Natural killer cell (primary cell): ENCODE measurements at regions of chr3 and their contacts with region 1.

Region 1: GRCh38 chr3:111668912-111669488 is 73.9 kb upstream of the ZBED2 start:
- DNase-seq: peak in 1 of 2 donors; percentile 71
- ATAC-seq: peak; percentile 44 to 57 (median 50)
- H3K4me3 ChIP-seq: no peak overlapping the region
- H3K4me3 Mint-ChIP-seq: peak overlapping the region; percentile 78
- H3K27ac ChIP-seq: no peak overlapping the region
- H3K27ac Mint-ChIP-seq: peak overlapping the region; percentile 89 to 97
- H3K4me1 ChIP-seq: peaks cover 28% of the 10 kb centered on the region
- H3K4me1 Mint-ChIP-seq: peaks cover 64 to 68% of the 10 kb centered on the region in 2 donors
- H3K27me3 ChIP-seq: no peaks in the 10 kb centered on the region
- H3K27me3 Mint-ChIP-seq: no peaks in the 10 kb centered on the region
- CTCF ChIP-seq: peak; percentile 95

Region 2: DNA sequence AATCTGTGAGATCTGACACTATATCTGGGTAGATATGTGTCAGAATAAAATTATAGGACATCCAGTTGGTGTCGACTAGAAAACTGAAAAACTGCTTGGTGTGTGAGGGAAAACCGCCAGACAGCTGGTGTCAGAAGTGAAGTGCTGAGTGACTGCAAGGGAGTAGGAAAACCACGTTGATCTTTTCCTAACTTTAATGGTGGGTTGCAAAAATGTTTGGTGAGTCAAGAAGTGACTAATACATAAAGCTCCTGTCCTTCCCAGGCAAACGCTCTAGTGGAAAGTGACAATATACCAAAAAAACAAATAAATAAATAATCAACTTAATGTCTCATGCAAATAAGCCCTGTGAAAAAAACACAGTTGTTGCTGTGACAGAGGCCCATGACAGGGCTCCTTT is 134.3 kb before region 1 on chr3:
- intact Hi-C with region 1: no loop called
- DNase-seq: no peak
- ATAC-seq: no peak
- H3K4me3 ChIP-seq: no peak overlapping the region
- H3K4me3 Mint-ChIP-seq: no peak overlapping the region
- H3K27ac ChIP-seq: no peak overlapping the region
- H3K27ac Mint-ChIP-seq: peak overlapping the region in 1 of 2 donors; percentile 10
- H3K4me1 ChIP-seq: peaks cover 8% of the 10 kb centered on the region
- H3K4me1 Mint-ChIP-seq: peaks cover 15 to 20% of the 10 kb centered on the region in 2 donors
- H3K27me3 ChIP-seq: no peaks in the 10 kb centered on the region
- H3K27me3 Mint-ChIP-seq: peaks cover 0 to 3% of the 10 kb centered on the region in 2 donors
- CTCF ChIP-seq: no peak

Region 3: GRCh38 chr3:111547631-111548030 is 121.4 kb before region 1 on chr3:
- intact Hi-C with region 1: loop called (anchors 5 kb)
- DNase-seq: peak in 1 of 2 donors; percentile 82
- ATAC-seq: peak; percentile 38 to 57 (median 56)
- H3K4me3 ChIP-seq: peak overlapping the region; percentile 23
- H3K4me3 Mint-ChIP-seq: no peak overlapping the region
- H3K27ac ChIP-seq: peak overlapping the region; percentile 93
- H3K27ac Mint-ChIP-seq: no peak overlapping the region
- H3K4me1 ChIP-seq: peaks cover 22% of the 10 kb centered on the region
- H3K4me1 Mint-ChIP-seq: peaks cover 0 to 11% of the 10 kb centered on the region in 2 donors
- H3K27me3 ChIP-seq: no peaks in the 10 kb centered on the region
- H3K27me3 Mint-ChIP-seq: no peaks in the 10 kb centered on the region
- CTCF ChIP-seq: no peak

Region 4: GRCh38 chr3:111859974-111860859 is 191.2 kb after region 1 on chr3:
- intact Hi-C with region 1: loop called (anchors 2 kb)
- DNase-seq: peak; percentile 61 to 81
- ATAC-seq: peak; percentile 46 to 75 (median 59)
- H3K4me3 ChIP-seq: peak overlapping the region; percentile 96
- H3K4me3 Mint-ChIP-seq: peak overlapping the region; percentile 93
- H3K27ac ChIP-seq: peak overlapping the region; percentile 93
- H3K27ac Mint-ChIP-seq: peak overlapping the region; percentile 93 to 97
- H3K4me1 ChIP-seq: peaks cover 15% of the 10 kb centered on the region
- H3K4me1 Mint-ChIP-seq: peaks cover 53 to 57% of the 10 kb centered on the region in 2 donors
- H3K27me3 ChIP-seq: no peaks in the 10 kb centered on the region
- H3K27me3 Mint-ChIP-seq: peaks cover 0 to 3% of the 10 kb centered on the region in 2 donors
- CTCF ChIP-seq: no peak

Region 5: GRCh38 chr3:111967651-111968274 is 298.8 kb after region 1 on chr3:
- intact Hi-C with region 1: loop called (anchors 1 kb)
- DNase-seq: peak; percentile 66 to 89
- ATAC-seq: peak; percentile 86 to 98 (median 95)
- H3K4me3 ChIP-seq: no peak overlapping the region
- H3K4me3 Mint-ChIP-seq: no peak overlapping the region
- H3K27ac ChIP-seq: no peak overlapping the region
- H3K27ac Mint-ChIP-seq: peak overlapping the region; percentile 8 to 62
- H3K4me1 ChIP-seq: no peaks in the 10 kb centered on the region
- H3K4me1 Mint-ChIP-seq: peaks cover 5 to 7% of the 10 kb centered on the region in 2 donors
- H3K27me3 ChIP-seq: no peaks in the 10 kb centered on the region
- H3K27me3 Mint-ChIP-seq: no peaks in the 10 kb centered on the region
- CTCF ChIP-seq: peak; percentile 96